Activated CD4-positive, alpha-beta memory T cell treated with anti-CD3 and anti-CD28 coated beads, Interleukin-2, amount 10 ng/mL, durations not matched to agents 7 days and 5 days (primary cell): ENCODE measurements at regions of chr11 and their contacts with region 1.

Region 1: DNA sequence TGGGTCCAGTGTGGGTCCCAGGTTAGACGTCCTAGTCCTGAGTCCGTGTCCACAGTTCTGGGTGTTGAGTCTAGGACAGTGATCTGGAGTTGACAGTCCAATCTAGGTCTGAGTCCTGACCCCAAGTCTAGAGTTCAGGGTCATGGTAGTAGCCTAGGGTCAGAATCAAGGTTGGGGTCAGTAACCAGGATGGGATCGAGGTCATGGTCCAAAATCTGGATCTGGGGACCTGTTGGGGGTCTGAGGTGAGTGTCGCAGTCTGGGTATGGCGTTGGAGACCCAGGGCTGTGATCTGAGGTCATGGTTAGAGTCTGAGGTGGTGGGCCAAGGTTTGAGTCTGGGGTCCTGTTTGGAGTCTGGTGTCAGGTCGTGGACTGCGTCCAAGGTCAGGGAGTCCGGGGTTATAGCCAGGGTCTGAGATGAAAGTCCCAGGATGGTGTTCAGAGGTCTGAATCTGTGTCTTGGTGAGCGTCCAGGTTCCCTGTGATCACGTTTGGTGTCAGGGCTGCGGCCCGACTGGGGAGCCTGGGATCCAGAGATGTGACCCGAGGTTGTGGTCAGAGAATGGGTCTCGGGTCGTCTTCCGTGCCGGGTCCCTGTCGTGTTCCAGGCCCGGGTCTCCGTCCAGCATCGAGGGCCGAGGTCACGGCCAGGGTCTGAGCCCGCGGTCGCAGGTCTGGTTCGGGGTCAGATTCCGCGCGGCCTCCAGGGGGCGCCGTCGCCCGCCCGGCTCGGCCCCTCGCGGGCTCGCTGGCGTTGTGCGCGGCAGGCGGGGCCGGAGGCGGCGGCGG is 445 bp upstream of the GRK2 start:
- DNase-seq: peak; percentile 81
- H3K4me3 Mint-ChIP-seq: peak overlapping the region; percentile 76
- H3K27ac Mint-ChIP-seq: peak overlapping the region; percentile 80
- H3K4me1 Mint-ChIP-seq: peaks cover 67% of the 10 kb centered on the region
- H3K27me3 Mint-ChIP-seq: no peaks in the 10 kb centered on the region

Region 2: DNA sequence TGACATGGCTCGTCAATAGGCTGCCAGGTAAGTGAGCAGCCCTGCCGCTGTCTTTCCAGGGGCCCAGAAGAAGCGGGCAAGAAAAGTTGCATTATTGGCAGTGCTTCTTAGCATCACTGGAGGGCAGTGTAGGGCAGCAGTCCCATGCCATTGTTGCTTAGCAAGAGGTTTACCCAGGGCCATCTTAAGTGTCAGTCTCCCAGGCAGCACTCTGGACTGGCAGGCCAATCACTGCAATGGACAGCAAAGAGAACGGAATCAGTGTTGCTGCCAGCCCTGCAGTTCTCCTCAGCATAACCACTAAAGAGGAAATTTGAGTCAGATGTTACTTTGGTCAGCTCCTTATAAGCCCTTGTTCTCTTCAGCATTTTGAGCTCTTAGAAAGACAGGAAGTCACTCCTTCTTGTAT is 13.0 kb before region 1 on chr11:
- CTCF ChIA-PET with region 1: interaction called, 61 read pairs
- POLR2A ChIA-PET with region 1: interaction called, 15 read pairs
- DNase-seq: peak; percentile 54
- H3K4me3 Mint-ChIP-seq: no peak overlapping the region
- H3K27ac Mint-ChIP-seq: peak overlapping the region; percentile 81
- H3K4me1 Mint-ChIP-seq: peaks cover 47% of the 10 kb centered on the region
- H3K27me3 Mint-ChIP-seq: no peaks in the 10 kb centered on the region

Region 3: DNA sequence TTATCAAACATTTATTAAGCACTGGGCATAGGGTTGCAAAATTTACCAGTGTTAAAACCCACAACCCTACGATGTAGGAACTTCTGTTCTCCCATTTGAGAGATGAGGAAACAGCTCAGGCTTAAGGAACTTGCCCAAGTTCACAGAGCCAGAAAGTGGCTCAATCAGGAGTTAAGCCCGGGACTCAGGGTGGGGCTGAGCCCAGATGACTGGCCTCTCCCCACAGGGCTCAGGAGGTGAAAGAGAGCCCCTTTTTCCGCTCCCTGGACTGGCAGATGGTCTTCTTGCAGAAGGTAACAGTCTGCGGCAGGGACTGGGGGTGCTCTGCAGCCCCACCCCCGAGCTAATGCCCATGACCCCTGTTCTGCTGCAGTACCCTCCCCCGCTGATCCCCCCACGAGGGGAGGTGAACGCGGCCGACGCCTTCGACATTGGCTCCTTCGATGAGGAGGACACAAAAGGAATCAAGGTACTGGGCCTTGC is 17.7 kb after region 1 on chr11:
- CTCF ChIA-PET with region 1: interaction called, 21 read pairs
- POLR2A ChIA-PET with region 1: interaction called, 494 read pairs
- DNase-seq: no peak
- H3K4me3 Mint-ChIP-seq: no peak overlapping the region
- H3K27ac Mint-ChIP-seq: peak overlapping the region; percentile 49
- H3K4me1 Mint-ChIP-seq: peaks cover 64% of the 10 kb centered on the region
- H3K27me3 Mint-ChIP-seq: no peaks in the 10 kb centered on the region

Region 4: DNA sequence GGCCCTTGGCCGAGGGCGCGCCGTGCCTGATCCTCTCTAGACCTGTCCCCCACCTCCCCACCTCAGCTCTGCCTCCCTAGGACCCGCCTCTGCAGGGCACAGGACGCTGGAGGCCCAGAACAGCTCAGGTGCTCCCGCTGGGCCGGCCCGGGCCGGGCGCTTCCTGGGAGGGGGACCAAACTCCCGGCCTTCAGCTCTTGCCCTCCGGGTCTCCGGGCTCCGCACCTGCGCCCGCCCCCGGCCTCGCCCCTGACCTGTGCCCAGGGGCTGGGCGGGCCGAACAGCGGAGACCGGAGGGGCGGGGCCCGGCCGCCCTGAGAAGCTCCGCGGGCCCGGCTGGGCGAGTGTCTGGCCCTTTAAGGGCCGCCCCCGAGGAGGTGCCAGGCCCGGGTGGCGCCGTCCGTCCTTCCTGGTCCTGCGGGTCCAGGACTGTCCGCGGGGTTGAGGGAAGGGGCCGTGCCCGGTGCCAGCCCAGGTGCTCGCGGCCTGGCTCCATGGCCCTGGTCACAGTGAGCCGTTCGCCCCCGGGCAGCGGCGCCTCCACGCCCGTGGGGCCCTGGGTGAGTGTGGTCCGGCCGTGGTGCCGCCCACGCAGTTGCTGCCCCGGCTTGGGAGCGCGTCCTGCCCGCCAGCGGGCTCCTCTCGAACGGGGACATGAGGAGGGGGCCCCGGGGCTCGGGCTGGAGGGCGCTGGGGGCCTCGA is 37.5 kb after region 1 on chr11 and contains the start of gene SSH3:
- CTCF ChIA-PET with region 1: interaction called, 4 read pairs
- POLR2A ChIA-PET with region 1: interaction called, 17 read pairs
- DNase-seq: peak; percentile 60
- H3K4me3 Mint-ChIP-seq: peak within 1 kb of the TSS; percentile 68
- H3K27ac Mint-ChIP-seq: no peak within 1 kb of the TSS
- H3K4me1 Mint-ChIP-seq: peaks cover 18% of the 10 kb centered on the region
- H3K27me3 Mint-ChIP-seq: no peaks in the 10 kb centered on the region
- total RNA-seq, gene SSH3: 15.4 to 19.0 TPM

Region 5: GRCh38 chr11:67382276-67383136 is 116.7 kb after region 1 on chr11:
- CTCF ChIA-PET with region 1: interaction called, 32 read pairs
- POLR2A ChIA-PET with region 1: interaction called, 3 read pairs
- DNase-seq: peak; percentile 87
- H3K4me3 Mint-ChIP-seq: no peak overlapping the region
- H3K27ac Mint-ChIP-seq: no peak overlapping the region
- H3K4me1 Mint-ChIP-seq: peaks cover 4% of the 10 kb centered on the region
- H3K27me3 Mint-ChIP-seq: peaks cover 35% of the 10 kb centered on the region